ENCODE measurements at regions of chr6 and their contacts with region 1.

Region 1: DNA sequence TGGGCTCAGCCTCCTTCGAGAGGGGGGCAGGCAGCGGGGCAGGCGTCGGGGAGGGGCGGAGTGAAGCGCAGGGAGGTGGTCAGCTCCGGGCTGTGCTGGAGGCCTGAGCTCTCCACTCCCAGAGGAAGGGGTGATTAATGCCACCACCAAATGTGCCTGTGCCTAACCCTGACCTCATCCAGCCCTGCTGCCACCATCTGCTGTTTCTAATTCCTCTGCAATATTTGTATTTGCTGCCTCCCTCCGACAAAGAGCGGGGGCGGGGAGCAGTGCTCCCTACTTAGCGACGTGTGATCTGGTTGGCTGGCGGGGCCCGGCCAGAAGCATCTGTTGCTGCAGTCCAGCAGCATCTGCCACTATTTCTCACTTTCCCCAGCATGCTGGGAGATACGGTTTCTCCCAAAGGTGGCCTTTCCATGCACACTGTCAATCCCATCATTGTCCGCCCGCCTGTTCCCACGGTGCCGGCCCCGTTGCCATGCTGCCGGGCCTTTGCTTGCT is 47.0 kb downstream of the DLL1 start:
- DNase-seq: no peak
- H3K4me3 ChIP-seq: no peak overlapping the region
- H3K4me3 Mint-ChIP-seq: no peak overlapping the region
- H3K27ac ChIP-seq: no peak overlapping the region
- H3K27ac Mint-ChIP-seq: no peak overlapping the region
- H3K4me1 ChIP-seq: no peaks in the 10 kb centered on the region
- H3K4me1 Mint-ChIP-seq: no peaks in the 10 kb centered on the region
- H3K27me3 ChIP-seq: no peaks in the 10 kb centered on the region
- H3K27me3 Mint-ChIP-seq: peaks cover 16 to 38% (median 33%) of the 10 kb centered on the region in 3 donors
- CTCF ChIP-seq: no peak

Region 2: GRCh38 chr6:169604076-169604475 is 639.8 kb before region 1 on chr6:
- intact Hi-C with region 1: no loop called
- DNase-seq: no peak
- H3K4me3 ChIP-seq: no peak overlapping the region
- H3K4me3 Mint-ChIP-seq: no peak overlapping the region
- H3K27ac ChIP-seq: no peak overlapping the region
- H3K27ac Mint-ChIP-seq: no peak overlapping the region
- H3K4me1 ChIP-seq: no peaks in the 10 kb centered on the region
- H3K4me1 Mint-ChIP-seq: no peaks in the 10 kb centered on the region
- H3K27me3 ChIP-seq: no peaks in the 10 kb centered on the region
- H3K27me3 Mint-ChIP-seq: no peaks in the 10 kb centered on the region
- CTCF ChIP-seq: no peak

Region 3: GRCh38 chr6:170206851-170207431 is 36.9 kb before region 1 on chr6:
- intact Hi-C with region 1: loop called in 1 of 2 experiments (anchors 2 kb)
- DNase-seq: no peak
- H3K4me3 ChIP-seq: no peak overlapping the region
- H3K4me3 Mint-ChIP-seq: no peak overlapping the region
- H3K27ac ChIP-seq: no peak overlapping the region
- H3K27ac Mint-ChIP-seq: no peak overlapping the region
- H3K4me1 ChIP-seq: no peaks in the 10 kb centered on the region
- H3K4me1 Mint-ChIP-seq: no peaks in the 10 kb centered on the region
- H3K27me3 ChIP-seq: no peaks in the 10 kb centered on the region
- H3K27me3 Mint-ChIP-seq: peaks cover 0 to 12% (median 6%) of the 10 kb centered on the region in 3 donors
- CTCF ChIP-seq: no peak

Measured in CD14-positive monocyte (primary cell).